ENCODE measurements at regions of chr11 and their contacts with region 1.

Region 1: DNA sequence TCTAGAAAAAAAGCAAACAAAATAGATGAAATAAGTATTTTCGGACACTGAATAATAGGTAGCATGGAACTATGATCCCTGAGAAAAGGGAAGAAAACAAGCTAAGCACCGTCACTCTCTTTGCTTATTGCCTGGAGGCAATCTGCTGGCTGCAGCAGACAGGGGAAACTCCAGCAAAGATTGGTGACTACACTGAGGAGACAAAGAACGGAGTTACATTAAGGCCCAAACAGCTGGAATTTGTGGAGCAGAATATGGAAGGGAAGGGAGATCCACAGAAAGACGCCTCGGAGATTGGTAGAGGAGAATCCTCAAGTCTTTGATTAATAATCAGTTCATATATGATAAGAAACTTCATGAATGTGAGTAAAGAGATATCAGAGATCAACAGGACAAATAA is 150.2 kb downstream of the TYR start:
- DNase-seq: no peak
- H3K4me3 ChIP-seq: no peak overlapping the region
- H3K4me3 Mint-ChIP-seq: no peak overlapping the region
- H3K27ac Mint-ChIP-seq: no peak overlapping the region
- H3K4me1 ChIP-seq: no peaks in the 10 kb centered on the region
- H3K4me1 Mint-ChIP-seq: no peaks in the 10 kb centered on the region
- H3K27me3 ChIP-seq: no peaks in the 10 kb centered on the region
- H3K27me3 Mint-ChIP-seq: peaks cover 3% of the 10 kb centered on the region
- CTCF ChIP-seq: no peak

Region 2: DNA sequence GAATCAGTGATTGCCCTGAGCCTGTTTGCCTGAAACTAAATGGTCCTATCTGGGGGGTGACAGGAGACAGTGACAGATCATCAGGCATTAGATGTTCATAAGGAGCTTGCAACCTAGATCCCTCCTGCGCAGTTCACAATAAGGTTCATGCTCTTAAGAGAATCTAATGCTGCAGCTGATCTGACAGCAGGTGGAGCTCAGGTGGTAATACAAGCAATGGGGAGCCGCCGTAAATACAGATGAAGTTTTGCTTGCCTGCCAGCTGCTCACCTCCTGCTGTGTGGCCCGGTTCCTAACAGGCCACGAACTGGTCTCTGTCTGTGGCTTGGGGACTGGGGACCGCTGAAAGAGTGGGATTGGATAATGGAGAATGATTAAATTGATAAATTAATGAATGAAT is 149.3 kb after region 1 on chr11:
- CTCF ChIA-PET with region 1: no interaction called
- POLR2A ChIA-PET with region 1: no interaction called
- intact Hi-C with region 1: loop called (anchors 5 kb)
- DNase-seq: peak; percentile 73 to 74
- H3K4me3 ChIP-seq: no peak overlapping the region
- H3K4me3 Mint-ChIP-seq: no peak overlapping the region
- H3K27ac Mint-ChIP-seq: no peak overlapping the region
- H3K4me1 ChIP-seq: no peaks in the 10 kb centered on the region
- H3K4me1 Mint-ChIP-seq: peaks cover 6% of the 10 kb centered on the region
- H3K27me3 ChIP-seq: no peaks in the 10 kb centered on the region
- H3K27me3 Mint-ChIP-seq: peaks cover 3% of the 10 kb centered on the region
- CTCF ChIP-seq: peak; percentile 51 to 68